BJ (cell line): ENCODE measurements at regions of chr15 and their contacts with region 1.

Region 1: GRCh38 chr15:51776952-51777574 is 25.7 kb downstream of the TMOD2 start:
- DNase-seq: no peak
- H3K4me3 ChIP-seq: no peak overlapping the region
- H3K27me3 ChIP-seq: no peaks in the 10 kb centered on the region
- CTCF ChIP-seq: peak; percentile 81

Region 2: DNA sequence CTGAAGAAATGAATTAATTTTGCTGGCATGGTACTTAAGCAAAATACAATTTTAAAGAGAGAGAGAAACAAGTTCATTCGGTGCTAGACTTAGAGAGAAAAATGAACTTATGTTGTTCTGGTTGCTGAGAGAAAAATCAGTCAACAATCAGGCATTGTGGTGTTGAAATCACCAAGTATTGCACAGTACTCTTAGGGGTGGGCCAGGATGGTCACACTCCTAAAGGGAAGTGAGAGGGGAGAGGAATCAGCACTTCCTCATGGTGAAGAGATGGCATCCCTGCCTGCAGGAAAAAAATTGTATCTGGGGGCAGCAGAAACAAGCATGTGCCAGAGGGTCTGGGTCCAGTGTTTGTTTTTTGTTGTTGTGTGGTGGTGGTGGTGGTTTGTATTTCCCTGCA is 147.5 kb before region 1 on chr15:
- CTCF ChIA-PET with region 1: interaction called, 10 read pairs
- POLR2A ChIA-PET with region 1: no interaction called
- DNase-seq: no peak
- H3K4me3 ChIP-seq: no peak overlapping the region
- H3K27me3 ChIP-seq: peaks cover 2% of the 10 kb centered on the region
- CTCF ChIP-seq: no peak

Region 3: GRCh38 chr15:51649659-51650521 is 127.2 kb before region 1 on chr15:
- CTCF ChIA-PET with region 1: interaction called, 226 read pairs
- POLR2A ChIA-PET with region 1: no interaction called
- DNase-seq: peak; percentile 35
- H3K4me3 ChIP-seq: no peak overlapping the region
- H3K27me3 ChIP-seq: peaks cover 3% of the 10 kb centered on the region
- CTCF ChIP-seq: peak; percentile 65

Region 4: DNA sequence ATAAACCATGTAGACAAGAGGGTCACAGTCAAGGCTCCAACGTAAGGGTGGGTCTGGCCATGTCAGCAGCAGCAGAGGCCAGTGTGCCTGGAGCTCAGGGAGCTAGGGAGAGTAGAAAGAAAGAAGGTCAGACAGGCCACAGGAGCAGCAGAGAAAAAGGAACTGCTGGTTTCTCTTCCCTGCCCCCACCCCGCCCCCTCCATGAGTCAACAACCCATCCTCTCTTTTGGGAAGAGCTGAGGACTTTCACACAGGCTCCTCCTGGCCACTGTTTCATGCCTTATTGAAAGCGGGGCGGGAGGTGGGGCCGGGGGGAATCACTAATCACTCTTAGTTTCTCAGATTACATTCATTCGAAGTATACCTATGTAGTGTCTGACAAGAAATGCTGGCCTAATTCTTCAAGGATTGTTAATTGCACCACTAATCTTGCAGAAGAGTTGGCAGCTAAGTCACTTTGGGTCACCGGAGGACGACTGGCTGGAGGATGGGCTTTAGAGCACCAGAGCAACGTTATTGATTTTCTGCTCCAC is 104.8 kb before region 1 on chr15:
- CTCF ChIA-PET with region 1: interaction called, 16 read pairs
- POLR2A ChIA-PET with region 1: no interaction called
- DNase-seq: no peak
- H3K4me3 ChIP-seq: no peak overlapping the region
- H3K27me3 ChIP-seq: peaks cover 5% of the 10 kb centered on the region
- CTCF ChIP-seq: no peak

Region 5: DNA sequence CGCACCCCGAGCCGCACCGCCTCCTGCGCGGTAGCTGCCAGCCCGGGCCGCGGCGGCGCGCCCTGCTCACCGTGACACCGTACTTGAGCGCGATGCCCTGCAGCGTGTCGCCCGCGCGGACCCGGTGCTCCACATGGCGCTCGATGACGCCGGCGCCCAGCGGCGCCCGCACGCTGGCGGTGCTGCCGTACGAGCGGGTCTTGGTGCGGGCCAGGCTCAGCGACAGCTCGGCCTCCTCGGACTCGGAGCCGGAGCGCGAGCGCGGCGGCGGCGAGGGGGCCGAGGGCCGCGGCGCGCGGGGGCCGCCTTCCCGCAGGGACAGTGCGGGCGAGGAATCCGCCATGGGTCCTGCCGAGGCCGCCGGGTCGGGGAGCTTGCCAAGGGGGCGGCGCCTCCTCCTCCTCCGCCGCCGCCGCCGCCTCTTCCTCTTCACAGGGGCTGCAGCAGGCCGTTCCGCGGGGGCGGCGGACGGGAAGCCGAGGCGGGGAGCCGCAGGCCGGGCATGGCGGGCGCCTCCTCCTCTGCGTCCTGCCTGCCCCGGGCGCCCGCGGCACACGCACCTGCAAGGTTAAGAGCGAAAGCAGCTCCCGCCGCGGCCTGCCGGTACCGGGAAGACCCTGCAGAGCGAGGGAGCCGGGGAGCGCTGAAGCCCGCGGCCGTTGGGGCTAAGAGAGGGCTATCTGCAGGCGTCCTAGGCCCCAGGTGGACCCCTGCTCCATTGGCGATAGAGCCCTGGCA is 39.6 kb before region 1 on chr15 and contains the start of gene LYSMD2:
- CTCF ChIA-PET with region 1: interaction called, 15 read pairs
- POLR2A ChIA-PET with region 1: no interaction called
- DNase-seq: no peak
- H3K4me3 ChIP-seq: peak within 1 kb of the TSS; percentile 61
- H3K27me3 ChIP-seq: no peaks in the 10 kb centered on the region
- CTCF ChIP-seq: no peak
- polyA plus RNA-seq, gene LYSMD2: 3.4 and 5.8 TPM in 2 replicates

Region 6: GRCh38 chr15:51793521-51794305 is 16.6 kb after region 1 on chr15:
- CTCF ChIA-PET with region 1: interaction called, 10 read pairs
- POLR2A ChIA-PET with region 1: no interaction called
- DNase-seq: no peak
- H3K4me3 ChIP-seq: no peak overlapping the region
- H3K27me3 ChIP-seq: no peaks in the 10 kb centered on the region
- CTCF ChIP-seq: no peak